Caco-2 (cell line): ENCODE measurements at regions of chr20 and their contacts with region 1.

Region 1: GRCh38 chr20:44609511-44610312 is 27.3 kb downstream of the PKIG start:
- DNase-seq: peak; percentile 97 to 99
- H3K4me3 ChIP-seq: peak overlapping the region; percentile 19
- H3K4me3 Mint-ChIP-seq: peak overlapping the region; percentile 71
- H3K27ac Mint-ChIP-seq: peak overlapping the region; percentile 91
- H3K4me1 ChIP-seq: peaks cover 12% of the 10 kb centered on the region
- H3K4me1 Mint-ChIP-seq: peaks cover 9% of the 10 kb centered on the region
- H3K27me3 ChIP-seq: no peaks in the 10 kb centered on the region
- H3K27me3 Mint-ChIP-seq: no peaks in the 10 kb centered on the region
- CTCF ChIP-seq: peak; percentile 100

Region 2: DNA sequence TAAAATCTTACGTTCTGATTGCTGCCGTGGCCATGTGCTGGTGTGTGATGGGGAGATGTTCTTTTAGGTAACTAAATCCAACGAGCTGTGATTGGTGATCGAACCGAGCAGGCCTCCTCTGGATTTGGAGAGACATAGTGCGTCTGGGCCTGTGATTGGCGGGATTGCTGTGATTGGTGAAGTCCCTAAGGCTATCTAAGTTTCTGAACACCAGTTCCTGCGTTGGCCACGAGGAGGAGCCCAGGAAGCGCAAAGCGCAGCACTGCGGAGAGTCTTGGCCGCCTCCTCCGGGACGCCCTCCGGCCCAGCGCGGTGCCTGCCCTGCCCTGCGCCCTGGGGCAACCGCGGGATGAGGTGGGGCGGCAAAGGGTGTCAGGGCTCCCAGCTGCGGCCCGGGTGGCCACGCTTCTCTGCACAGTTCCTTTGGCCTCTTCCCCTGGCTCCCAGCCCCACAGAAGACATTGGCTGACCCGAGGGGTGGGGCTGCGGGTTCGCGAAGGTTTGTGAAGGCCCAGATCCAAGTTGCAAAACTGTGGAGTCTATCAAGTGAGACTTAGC is 221.2 kb before region 1 on chr20:
- CTCF ChIA-PET with region 1: interaction called, 3 read pairs
- POLR2A ChIA-PET with region 1: no interaction called
- intact Hi-C with region 1: loop called (anchors 1 kb)
- DNase-seq: peak in 1 of 2 experiments; percentile 75
- H3K4me3 ChIP-seq: no peak overlapping the region
- H3K4me3 Mint-ChIP-seq: no peak overlapping the region
- H3K27ac Mint-ChIP-seq: peak overlapping the region; percentile 18
- H3K4me1 ChIP-seq: peaks cover 60% of the 10 kb centered on the region
- H3K4me1 Mint-ChIP-seq: peaks cover 53% of the 10 kb centered on the region
- H3K27me3 ChIP-seq: no peaks in the 10 kb centered on the region
- H3K27me3 Mint-ChIP-seq: no peaks in the 10 kb centered on the region
- CTCF ChIP-seq: peak; percentile 73 to 78

Region 3: DNA sequence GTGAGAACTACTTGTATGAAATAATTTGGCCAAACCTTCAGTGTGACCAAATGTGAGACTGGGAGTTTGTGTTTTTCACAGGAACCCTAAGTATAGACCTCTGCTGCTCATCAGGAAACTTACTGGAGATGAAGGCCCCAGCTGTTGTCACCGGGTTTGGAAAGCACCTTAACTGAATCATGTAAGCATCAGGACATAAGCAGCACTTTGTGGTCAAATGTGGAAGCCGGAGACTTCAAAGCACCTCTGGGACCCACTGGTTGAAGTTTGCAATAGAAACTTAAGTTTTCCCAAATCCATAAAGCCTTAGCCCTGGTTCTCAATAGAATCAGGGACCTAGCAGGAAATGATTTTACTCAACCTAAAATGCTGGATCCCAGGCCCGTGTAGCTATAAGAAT is 119.8 kb before region 1 on chr20:
- CTCF ChIA-PET with region 1: interaction called, 6 read pairs
- POLR2A ChIA-PET with region 1: no interaction called
- intact Hi-C with region 1: loop called (anchors 1 kb)
- DNase-seq: no peak
- H3K4me3 ChIP-seq: no peak overlapping the region
- H3K4me3 Mint-ChIP-seq: no peak overlapping the region
- H3K27ac Mint-ChIP-seq: no peak overlapping the region
- H3K4me1 ChIP-seq: no peaks in the 10 kb centered on the region; the same call in 1 of the 2 replicates
- H3K4me1 Mint-ChIP-seq: no peaks in the 10 kb centered on the region
- H3K27me3 ChIP-seq: no peaks in the 10 kb centered on the region
- H3K27me3 Mint-ChIP-seq: no peaks in the 10 kb centered on the region
- CTCF ChIP-seq: no peak

Region 4: DNA sequence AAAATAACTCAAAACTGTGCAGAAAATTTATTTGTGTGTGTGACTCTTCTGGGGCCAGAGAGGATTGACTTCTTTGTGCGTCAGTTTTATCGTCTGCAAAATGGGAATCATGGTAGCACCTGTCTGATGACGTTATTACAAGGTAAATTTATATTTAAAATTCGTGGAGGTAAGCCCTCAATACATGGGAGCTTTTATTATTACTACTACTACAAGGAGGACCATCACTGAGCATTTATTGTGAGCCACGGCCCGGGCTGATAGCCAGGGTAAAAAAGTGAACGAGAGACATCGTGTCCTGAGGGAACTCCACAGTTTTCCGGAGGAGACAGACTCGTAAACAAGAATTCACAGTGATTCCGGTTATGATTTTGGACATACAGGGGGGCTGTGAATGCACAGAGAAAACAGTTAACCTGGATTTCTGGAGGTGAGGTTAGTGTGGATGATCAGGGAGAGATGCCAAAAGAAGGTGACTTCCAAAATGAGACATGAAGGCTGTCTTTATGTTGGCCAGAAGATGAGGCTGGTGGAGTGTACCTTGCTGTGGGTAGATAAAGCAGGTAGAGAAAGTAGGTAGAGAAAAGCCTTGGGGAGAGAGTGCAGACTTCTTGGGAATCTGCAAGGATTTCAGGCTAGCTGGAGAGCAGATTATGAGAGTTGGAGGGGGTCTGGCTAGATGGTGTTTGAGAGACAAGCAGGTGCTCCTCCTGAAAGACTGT is 77.3 kb before region 1 on chr20:
- CTCF ChIA-PET with region 1: interaction called, 5 read pairs
- POLR2A ChIA-PET with region 1: no interaction called
- intact Hi-C with region 1: loop called (anchors 1 kb)
- DNase-seq: no peak
- H3K4me3 ChIP-seq: peak overlapping the region; percentile 71
- H3K4me3 Mint-ChIP-seq: no peak overlapping the region
- H3K27ac Mint-ChIP-seq: no peak overlapping the region
- H3K4me1 ChIP-seq: peaks cover 21% of the 10 kb centered on the region
- H3K4me1 Mint-ChIP-seq: no peaks in the 10 kb centered on the region
- H3K27me3 ChIP-seq: no peaks in the 10 kb centered on the region
- H3K27me3 Mint-ChIP-seq: no peaks in the 10 kb centered on the region
- CTCF ChIP-seq: no peak

Region 5: DNA sequence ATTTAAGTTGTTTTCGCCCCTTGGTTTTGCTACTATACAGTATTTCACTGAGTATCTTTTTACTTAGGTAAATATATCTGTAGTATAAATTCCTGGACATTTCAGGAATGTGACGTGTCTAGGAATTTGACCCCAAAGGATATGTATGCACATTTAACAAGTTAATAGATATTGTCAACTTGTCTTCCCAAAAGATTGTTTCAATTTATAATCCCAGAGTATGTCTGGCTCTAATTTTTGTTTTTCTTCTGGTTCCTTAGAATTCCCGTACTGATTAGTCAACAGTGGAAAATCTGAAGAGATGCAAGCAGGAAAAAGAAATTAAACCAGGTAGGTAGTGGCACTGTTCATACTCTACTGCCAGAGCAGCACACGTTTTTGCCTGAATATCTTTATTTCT is 20.2 kb before region 1 on chr20:
- CTCF ChIA-PET with region 1: interaction called, 8 read pairs
- POLR2A ChIA-PET with region 1: no interaction called
- intact Hi-C with region 1: loop called (anchors 2 kb)
- DNase-seq: no peak
- H3K4me3 ChIP-seq: no peak overlapping the region
- H3K4me3 Mint-ChIP-seq: no peak overlapping the region
- H3K27ac Mint-ChIP-seq: no peak overlapping the region
- H3K4me1 ChIP-seq: peaks cover 48% of the 10 kb centered on the region
- H3K4me1 Mint-ChIP-seq: peaks cover 37% of the 10 kb centered on the region
- H3K27me3 ChIP-seq: no peaks in the 10 kb centered on the region
- H3K27me3 Mint-ChIP-seq: no peaks in the 10 kb centered on the region
- CTCF ChIP-seq: no peak

Region 6: GRCh38 chr20:44692932-44693476 is 83.3 kb after region 1 on chr20:
- CTCF ChIA-PET with region 1: no interaction called
- POLR2A ChIA-PET with region 1: no interaction called
- intact Hi-C with region 1: no loop called
- DNase-seq: peak; percentile 96 to 98
- H3K4me3 ChIP-seq: no peak overlapping the region
- H3K4me3 Mint-ChIP-seq: peak overlapping the region; percentile 64
- H3K27ac Mint-ChIP-seq: peak overlapping the region; percentile 87
- H3K4me1 ChIP-seq: peaks cover 21% of the 10 kb centered on the region
- H3K4me1 Mint-ChIP-seq: peaks cover 29% of the 10 kb centered on the region
- H3K27me3 ChIP-seq: no peaks in the 10 kb centered on the region
- H3K27me3 Mint-ChIP-seq: no peaks in the 10 kb centered on the region
- CTCF ChIP-seq: no peak

Region 7: GRCh38 chr20:45052698-45053429 is 443.2 kb after region 1 on chr20:
- CTCF ChIA-PET with region 1: no interaction called
- POLR2A ChIA-PET with region 1: no interaction called
- intact Hi-C with region 1: no loop called
- DNase-seq: no peak
- H3K4me3 ChIP-seq: no peak overlapping the region
- H3K4me3 Mint-ChIP-seq: no peak overlapping the region
- H3K27ac Mint-ChIP-seq: no peak overlapping the region
- H3K4me1 ChIP-seq: no peaks in the 10 kb centered on the region
- H3K4me1 Mint-ChIP-seq: no peaks in the 10 kb centered on the region
- H3K27me3 ChIP-seq: no peaks in the 10 kb centered on the region
- H3K27me3 Mint-ChIP-seq: no peaks in the 10 kb centered on the region
- CTCF ChIP-seq: no peak